Esophagus squamous epithelium (tissue), 5 donors: ENCODE measurements at regions of chr1 and their contacts with region 1.

Region 1: DNA sequence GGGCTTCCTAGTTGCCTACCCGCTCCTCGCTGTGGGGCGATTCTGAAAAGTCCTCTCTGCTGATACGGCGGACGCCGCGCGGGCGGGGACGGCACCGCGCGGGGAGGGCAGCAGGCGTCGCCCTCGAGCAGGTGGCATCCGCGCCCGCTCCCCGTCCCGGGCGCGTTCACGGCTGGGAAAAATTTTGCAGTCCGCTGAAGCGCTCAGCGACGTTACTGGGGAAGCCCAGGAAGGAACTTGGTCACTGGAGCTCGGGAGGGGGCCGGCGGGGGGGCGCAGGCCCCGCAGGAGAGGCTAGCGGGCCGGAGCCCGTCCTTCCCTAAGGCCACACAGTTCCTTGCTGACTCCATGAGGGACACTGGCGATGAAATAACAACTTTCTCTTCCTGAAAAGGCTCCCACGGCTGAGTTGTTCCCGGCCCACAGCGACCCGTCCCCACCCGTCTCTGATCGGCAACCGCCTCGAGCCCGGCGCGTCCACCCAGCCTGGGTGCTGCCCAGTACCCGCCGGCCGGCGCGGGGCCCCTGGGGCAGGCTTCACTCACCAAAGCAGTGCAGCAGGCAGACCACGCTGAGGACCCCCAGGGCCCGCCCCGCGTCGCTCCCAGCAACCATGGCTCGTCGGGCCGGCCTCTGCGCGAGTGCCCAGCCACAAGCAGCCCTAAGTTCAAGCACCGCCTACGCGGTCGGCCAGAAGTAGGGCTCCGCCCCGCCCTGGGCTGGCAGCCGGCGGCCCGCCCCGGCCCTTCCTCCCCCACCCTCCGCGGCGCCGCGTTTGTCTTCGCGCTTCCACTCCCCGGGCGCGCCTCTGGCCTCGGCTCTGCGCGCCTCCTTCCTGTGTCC is at the start of gene CD58:
- DNase-seq: peak; percentile 53
- H3K4me3 ChIP-seq: peak within 1 kb of the TSS; percentile 72 to 94 (median 85)
- H3K27ac ChIP-seq: peak within 1 kb of the TSS; percentile 96 to 99 (median 98)
- H3K4me1 ChIP-seq: peaks cover 21 to 61% (median 21%) of the 10 kb centered on the region in 3 donors
- H3K27me3 ChIP-seq: no peaks in the 10 kb centered on the region
- CTCF ChIP-seq: peak; percentile 52 to 76 (median 72)
- POLR2A ChIP-seq: peak in 2 of 4 donors; percentile 59 to 90
- total RNA-seq, gene CD58: 19.4 to 54.4 (median 32.5) TPM

Region 2: GRCh38 chr1:116724765-116725375 is 154.3 kb after region 1 on chr1:
- intact Hi-C with region 1: loop called (anchors 10 kb)
- DNase-seq: peak; percentile 11
- H3K4me3 ChIP-seq: no peak overlapping the region
- H3K27ac ChIP-seq: no peak overlapping the region
- H3K4me1 ChIP-seq: peaks cover 18 to 50% (median 27%) of the 10 kb centered on the region in 3 donors
- H3K27me3 ChIP-seq: no peaks in the 10 kb centered on the region
- CTCF ChIP-seq: peak; percentile 28 to 77 (median 70)
- POLR2A ChIP-seq: no peak